IMR-90 (cell line): ENCODE measurements at regions of chr20 and their contacts with region 1.

Region 1: DNA sequence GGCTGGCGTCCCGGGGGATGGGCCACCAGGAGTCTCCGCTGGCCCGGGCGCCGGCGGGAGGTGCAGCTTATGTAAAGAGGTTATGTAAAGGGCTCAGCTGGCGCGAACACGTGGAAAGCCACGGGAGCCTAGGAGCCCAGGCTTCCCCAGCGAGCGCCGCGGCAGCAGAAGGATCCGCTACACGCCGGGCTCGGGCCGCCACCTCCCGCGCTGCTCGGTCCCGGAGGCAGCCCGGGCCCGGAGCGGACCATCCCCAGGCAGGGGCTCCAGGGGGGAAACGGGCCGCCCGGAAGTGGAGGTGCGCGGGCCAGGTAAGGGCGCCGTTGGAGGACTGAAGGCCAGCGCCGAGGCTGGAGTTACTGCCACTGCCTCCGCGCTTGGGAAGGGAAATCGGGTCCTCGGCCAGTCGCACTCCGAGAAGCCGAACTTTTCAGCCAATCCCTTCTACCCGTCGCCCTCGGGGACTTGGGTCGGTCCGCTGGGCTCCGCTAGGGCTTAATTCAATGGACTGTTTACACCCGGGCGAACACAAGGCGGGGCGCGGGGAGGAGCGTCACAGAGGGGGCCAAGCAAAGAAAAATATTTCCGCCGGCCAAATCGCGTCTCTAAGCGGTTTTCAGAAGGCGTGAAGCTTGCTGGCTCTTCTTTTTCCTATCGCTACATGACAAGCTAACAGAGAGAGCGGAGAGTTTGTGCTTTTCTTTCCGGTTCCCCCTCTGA is 398 bp downstream of the STK35 start:
- DNase-seq: peak; percentile 91
- ATAC-seq: peak; percentile 88
- H3K4me3 ChIP-seq: peak overlapping the region; percentile 81
- H3K27ac ChIP-seq: peak overlapping the region; percentile 99
- H3K4me1 ChIP-seq: no peaks in the 10 kb centered on the region
- H3K27me3 ChIP-seq: no peaks in the 10 kb centered on the region; the same call in 1 of the 2 replicates
- CTCF ChIP-seq: no peak
- POLR2A ChIP-seq: peak; percentile 46
- RAD21 ChIP-seq: no peak

Region 2: GRCh38 chr20:1965520-1966351 is 136.3 kb before region 1 on chr20:
- CTCF ChIA-PET with region 1: no interaction called
- POLR2A ChIA-PET with region 1: no interaction called
- dilution Hi-C with region 1: no loop called
- in situ Hi-C with region 1: no loop called
- intact Hi-C with region 1: loop called (anchors 1 kb)
- DNase-seq: peak; percentile 54
- ATAC-seq: peak; percentile 83
- H3K4me3 ChIP-seq: no peak overlapping the region
- H3K27ac ChIP-seq: no peak overlapping the region
- H3K4me1 ChIP-seq: no peaks in the 10 kb centered on the region
- H3K27me3 ChIP-seq: peaks cover 60% of the 10 kb centered on the region
- CTCF ChIP-seq: peak; percentile 86
- POLR2A ChIP-seq: no peak
- RAD21 ChIP-seq: peak; percentile 84

Region 3: DNA sequence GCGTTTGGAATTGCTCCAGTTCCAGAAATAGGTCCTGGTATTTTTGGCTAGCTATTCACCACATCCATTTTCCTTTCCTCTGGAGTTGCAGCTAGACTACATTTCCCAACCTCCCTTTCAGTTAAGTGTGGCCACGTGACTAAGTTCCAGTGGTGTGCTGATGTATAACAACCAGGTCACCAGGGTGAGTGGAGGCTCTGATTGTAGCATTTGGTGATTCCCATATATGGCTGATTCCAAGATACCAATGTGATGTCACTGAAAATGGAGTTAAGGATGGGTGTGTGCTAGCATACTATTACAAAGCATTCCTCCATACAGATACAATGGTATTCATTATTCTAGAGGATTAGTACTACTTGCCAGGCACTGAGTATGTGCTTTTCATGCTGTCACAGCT is 50.1 kb before region 1 on chr20:
- CTCF ChIA-PET with region 1: no interaction called
- POLR2A ChIA-PET with region 1: no interaction called
- dilution Hi-C with region 1: no loop called
- in situ Hi-C with region 1: no loop called
- intact Hi-C with region 1: no loop called
- DNase-seq: no peak
- ATAC-seq: no peak
- H3K4me3 ChIP-seq: no peak overlapping the region
- H3K27ac ChIP-seq: no peak overlapping the region
- H3K4me1 ChIP-seq: no peaks in the 10 kb centered on the region
- H3K27me3 ChIP-seq: no peaks in the 10 kb centered on the region
- CTCF ChIP-seq: no peak
- POLR2A ChIP-seq: no peak
- RAD21 ChIP-seq: no peak

Region 4: GRCh38 chr20:2137552-2138201 is 35.7 kb after region 1 on chr20:
- CTCF ChIA-PET with region 1: no interaction called
- POLR2A ChIA-PET with region 1: no interaction called
- dilution Hi-C with region 1: no loop called
- in situ Hi-C with region 1: no loop called
- intact Hi-C with region 1: loop called (anchors 5 kb)
- DNase-seq: peak; percentile 96
- ATAC-seq: peak; percentile 86
- H3K4me3 ChIP-seq: no peak overlapping the region
- H3K27ac ChIP-seq: peak overlapping the region; percentile 63; the same call in 1 of the 2 replicates
- H3K4me1 ChIP-seq: peaks cover 42% of the 10 kb centered on the region
- H3K27me3 ChIP-seq: no peaks in the 10 kb centered on the region
- CTCF ChIP-seq: no peak
- POLR2A ChIP-seq: no peak
- RAD21 ChIP-seq: no peak

Region 5: DNA sequence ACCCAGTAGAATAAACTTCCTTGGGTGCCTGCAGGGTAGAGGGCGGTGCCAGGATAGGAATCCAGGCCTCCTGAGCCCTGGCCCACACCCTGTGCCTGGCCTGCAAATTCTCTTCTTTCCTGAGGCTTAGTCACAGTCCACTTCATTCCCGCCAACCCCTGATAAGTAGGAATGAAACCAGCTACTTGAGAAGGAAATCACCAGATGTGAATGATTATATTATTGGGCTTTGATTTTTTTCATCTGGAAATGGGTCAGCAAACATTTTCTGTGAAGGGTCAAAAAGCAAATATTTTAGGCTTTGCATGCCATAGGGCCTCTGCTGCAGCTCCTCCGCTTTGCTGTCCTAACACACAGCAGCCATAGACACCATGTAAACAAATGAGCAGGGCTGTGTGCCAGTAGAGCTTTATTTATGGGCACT is 49.8 kb after region 1 on chr20:
- CTCF ChIA-PET with region 1: interaction called, 3 read pairs
- POLR2A ChIA-PET with region 1: no interaction called
- dilution Hi-C with region 1: no loop called
- in situ Hi-C with region 1: no loop called
- intact Hi-C with region 1: loop called (anchors 5 kb)
- DNase-seq: peak; percentile 64
- ATAC-seq: peak; percentile 85
- H3K4me3 ChIP-seq: no peak overlapping the region
- H3K27ac ChIP-seq: no peak overlapping the region
- H3K4me1 ChIP-seq: peaks cover 8% of the 10 kb centered on the region
- H3K27me3 ChIP-seq: no peaks in the 10 kb centered on the region
- CTCF ChIP-seq: no peak
- POLR2A ChIP-seq: no peak
- RAD21 ChIP-seq: no peak

Region 6: DNA sequence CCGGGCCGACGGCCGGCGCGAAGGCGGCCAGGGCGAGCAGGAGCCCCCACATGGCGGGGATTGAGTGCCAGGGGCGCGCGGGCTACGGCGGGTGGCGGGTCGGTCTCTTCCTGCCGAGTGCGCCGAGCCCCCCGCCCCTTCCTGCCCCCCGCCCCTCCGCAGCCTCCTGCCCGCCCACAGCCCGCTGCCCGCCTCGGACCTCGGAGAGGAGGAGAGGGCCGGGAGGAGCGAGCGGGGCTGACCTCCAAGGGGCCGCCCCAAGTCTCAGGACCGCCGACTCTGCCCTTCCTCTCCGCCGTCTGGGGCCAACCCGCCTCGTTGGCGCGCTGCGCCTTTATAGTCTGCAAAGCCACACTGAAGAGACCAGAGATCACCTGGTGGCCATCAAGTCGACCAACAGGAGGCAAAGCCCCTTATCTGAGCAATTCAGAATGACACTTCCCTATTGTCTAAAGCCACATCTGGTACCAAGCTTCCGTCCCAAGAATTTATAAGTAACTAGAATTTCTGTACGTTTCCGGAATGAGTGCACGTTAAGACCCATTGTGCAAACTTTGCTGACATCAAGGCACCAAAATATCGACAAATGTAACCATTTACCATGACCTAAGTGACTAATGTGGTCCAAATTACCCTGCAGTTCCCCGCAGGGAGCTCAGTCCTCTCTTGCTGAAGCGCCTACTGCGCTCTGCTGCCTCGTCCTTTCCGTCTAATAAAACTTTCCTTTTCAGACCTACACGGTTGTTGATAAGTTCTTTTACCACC is 698.7 kb after region 1 on chr20 and contains the start of gene CPXM1:
- CTCF ChIA-PET with region 1: no interaction called
- POLR2A ChIA-PET with region 1: no interaction called
- dilution Hi-C with region 1: no loop called
- in situ Hi-C with region 1: loop called (anchors 25 kb)
- intact Hi-C with region 1: no loop called
- DNase-seq: no peak
- ATAC-seq: peak; percentile 51
- H3K4me3 ChIP-seq: peak within 1 kb of the TSS; percentile 25
- H3K27ac ChIP-seq: peak within 1 kb of the TSS; percentile 32; the same call in 1 of the 2 replicates
- H3K4me1 ChIP-seq: peaks cover 2% of the 10 kb centered on the region; the same call in 1 of the 2 replicates
- H3K27me3 ChIP-seq: peaks cover 61% of the 10 kb centered on the region
- CTCF ChIP-seq: no peak
- POLR2A ChIP-seq: no peak
- RAD21 ChIP-seq: no peak
- total RNA-seq, gene CPXM1: 0.83 and 1.1 TPM in 2 replicates